ENCODE measurements at regions of chr22 and their contacts with region 1.

Region 1: GRCh38 chr22:40276996-40277823 is 69.1 kb upstream of the ADSL start:
- DNase-seq: no peak
- H3K4me3 ChIP-seq: peak overlapping the region; percentile 51 to 58
- H3K27ac ChIP-seq: peak overlapping the region; percentile 80 to 89
- H3K4me1 ChIP-seq: peaks cover 3 to 11% of the 10 kb centered on the region in 2 donors
- H3K27me3 ChIP-seq: no peaks in the 10 kb centered on the region
- CTCF ChIP-seq: no peak

Region 2: DNA sequence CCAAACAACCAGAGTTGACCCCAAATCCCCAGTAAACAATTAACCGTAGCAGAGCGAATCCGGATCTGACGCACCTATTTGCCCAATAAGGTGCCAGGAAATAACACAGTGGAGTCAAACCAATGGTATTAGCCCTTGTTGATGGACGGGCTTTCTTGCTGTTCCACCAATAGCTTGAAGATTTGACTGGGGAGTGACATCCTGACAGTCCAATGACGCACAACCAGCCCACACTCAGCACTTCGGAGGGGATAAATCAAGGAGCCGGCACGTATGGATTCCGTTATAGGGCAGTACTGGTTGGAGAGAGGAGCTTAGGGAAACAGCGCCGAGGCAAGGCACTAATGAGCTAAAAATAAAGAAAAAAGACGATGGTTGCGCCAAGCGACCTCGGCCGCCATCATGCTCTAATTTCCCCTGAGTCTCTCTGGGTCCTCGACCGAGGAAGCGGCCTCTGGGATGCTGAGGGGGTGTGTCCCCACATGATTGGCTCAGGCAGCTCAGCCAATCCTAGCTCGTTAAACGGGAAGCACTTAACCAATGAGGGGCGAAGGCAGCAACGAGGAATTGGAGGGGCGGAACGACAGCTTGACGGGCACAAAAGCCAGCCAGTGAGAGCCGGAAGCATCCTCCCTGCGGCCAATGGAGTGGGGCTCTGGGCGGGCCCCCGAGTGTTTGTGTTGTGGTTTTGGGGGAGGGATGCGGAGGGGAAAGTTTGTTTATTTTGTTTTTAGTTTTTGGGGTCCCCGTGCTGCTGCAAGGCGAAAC is 232.9 kb before region 1 on chr22:
- intact Hi-C with region 1: loop called (anchors 1 kb)
- DNase-seq: peak; percentile 97 to 99
- H3K4me3 ChIP-seq: peak overlapping the region; percentile 91 to 96
- H3K27ac ChIP-seq: peak overlapping the region; percentile 85 to 93
- H3K4me1 ChIP-seq: peaks cover 0 to 8% of the 10 kb centered on the region in 2 donors
- H3K27me3 ChIP-seq: no peaks in the 10 kb centered on the region
- CTCF ChIP-seq: no peak

Region 3: DNA sequence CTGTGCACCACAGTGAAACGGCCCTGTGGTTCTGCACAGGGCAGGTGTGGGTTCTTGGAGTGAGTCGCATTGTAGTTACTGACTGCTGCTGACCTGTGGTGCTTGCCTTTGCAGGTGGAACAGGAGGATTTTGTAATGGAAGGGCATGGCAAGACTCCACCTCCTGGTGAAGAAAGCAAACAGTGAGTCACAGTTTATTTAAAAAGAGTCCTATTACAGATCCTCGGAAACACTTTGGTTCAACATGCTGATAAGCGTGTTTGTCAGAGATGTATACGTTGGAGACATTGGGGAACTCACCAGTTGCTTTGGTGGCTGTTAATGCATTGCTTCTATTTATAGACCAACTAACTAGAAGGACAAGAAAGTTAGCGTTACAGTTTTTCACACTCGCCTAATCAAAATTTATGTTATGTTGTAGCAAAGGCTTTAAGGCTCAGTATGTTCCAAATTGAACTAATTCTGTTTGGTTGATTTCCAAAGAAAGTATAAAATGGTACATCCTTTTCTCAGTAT is 121.2 kb before region 1 on chr22:
- intact Hi-C with region 1: loop called (anchors 5 kb)
- DNase-seq: no peak
- H3K4me3 ChIP-seq: no peak overlapping the region
- H3K27ac ChIP-seq: peak overlapping the region; percentile 79 to 94
- H3K4me1 ChIP-seq: peaks cover 4 to 20% of the 10 kb centered on the region in 2 donors
- H3K27me3 ChIP-seq: no peaks in the 10 kb centered on the region
- CTCF ChIP-seq: peak in 1 of 3 experiments; percentile 11

Region 4: GRCh38 chr22:40196628-40197360 is 80.4 kb before region 1 on chr22:
- intact Hi-C with region 1: loop called (anchors 5 kb)
- DNase-seq: peak in 1 of 2 donors; percentile 76
- H3K4me3 ChIP-seq: peak overlapping the region in 1 of 2 donors; percentile 20
- H3K27ac ChIP-seq: peak overlapping the region; percentile 47 to 62
- H3K4me1 ChIP-seq: peaks cover 4 to 26% of the 10 kb centered on the region in 2 donors
- H3K27me3 ChIP-seq: no peaks in the 10 kb centered on the region
- CTCF ChIP-seq: no peak

Region 5: DNA sequence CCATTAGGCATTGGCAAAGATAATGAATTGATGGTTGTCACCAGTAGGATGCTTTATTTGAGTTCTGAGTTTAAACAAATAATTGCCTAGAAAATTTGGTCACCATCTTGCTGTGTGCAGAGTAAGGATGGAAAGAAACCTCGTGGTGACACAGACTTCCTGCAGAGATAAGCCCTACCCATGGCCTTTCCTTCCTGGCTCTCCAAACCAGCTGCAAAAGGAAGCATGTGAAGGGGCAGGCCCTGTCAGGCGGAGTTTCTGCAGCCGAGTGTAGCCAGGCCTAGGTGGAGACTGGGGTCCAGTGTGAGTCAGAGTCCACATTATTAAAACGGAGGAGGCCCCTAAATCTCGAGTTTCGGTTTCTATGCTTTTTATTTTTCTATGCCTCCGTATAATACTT is 14.0 kb before region 1 on chr22:
- intact Hi-C with region 1: no loop called
- DNase-seq: no peak
- H3K4me3 ChIP-seq: peak overlapping the region in 1 of 2 donors; percentile 23
- H3K27ac ChIP-seq: peak overlapping the region; percentile 64 to 70
- H3K4me1 ChIP-seq: peaks cover 6 to 21% of the 10 kb centered on the region in 2 donors
- H3K27me3 ChIP-seq: no peaks in the 10 kb centered on the region
- CTCF ChIP-seq: no peak

Region 6: GRCh38 chr22:40346178-40347118 is 69.2 kb after region 1 on chr22 and contains the start of gene ADSL:
- intact Hi-C with region 1: loop called (anchors 5 kb)
- DNase-seq: peak; percentile 33 to 90
- H3K4me3 ChIP-seq: peak within 1 kb of the TSS; percentile 66 to 93
- H3K27ac ChIP-seq: peak within 1 kb of the TSS; percentile 66 to 90
- H3K4me1 ChIP-seq: peaks cover 9 to 19% of the 10 kb centered on the region in 2 donors
- H3K27me3 ChIP-seq: no peaks in the 10 kb centered on the region
- CTCF ChIP-seq: peak in 1 of 3 experiments; percentile 17
- total RNA-seq, gene ADSL: 31.3 TPM

Measured in ascending aorta (tissue), 2 donors.